ENCODE measurements at regions of chr13 and their contacts with region 1.

Region 1: GRCh38 chr13:44435142-44435982 is 61.7 kb downstream of the SERP2 start:
- DNase-seq: peak; percentile 99
- H3K4me3 Mint-ChIP-seq: peak overlapping the region; percentile 92
- H3K27ac Mint-ChIP-seq: peak overlapping the region; percentile 96
- H3K4me1 Mint-ChIP-seq: peaks cover 41% of the 10 kb centered on the region
- H3K27me3 Mint-ChIP-seq: no peaks in the 10 kb centered on the region
- CTCF ChIP-seq: no peak

Region 2: DNA sequence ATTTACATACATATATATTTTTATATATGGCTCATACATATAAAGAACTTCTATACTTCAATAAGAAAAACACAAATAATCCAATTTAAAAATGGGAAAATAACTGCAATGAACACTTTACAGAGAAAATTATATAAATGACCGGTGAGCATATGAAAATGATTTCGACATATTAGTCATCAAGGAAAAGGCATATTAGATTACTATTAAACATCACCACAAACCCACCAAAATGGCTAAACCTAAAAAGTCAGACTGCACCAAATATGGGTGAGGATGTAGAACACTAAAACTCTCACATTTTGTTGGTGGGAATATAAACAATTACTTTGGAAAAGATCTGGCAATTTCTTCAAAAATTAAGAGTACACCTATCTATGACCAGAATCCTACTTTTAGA is 964.8 kb before region 1 on chr13:
- CTCF ChIA-PET with region 1: no interaction called
- POLR2A ChIA-PET with region 1: no interaction called
- intact Hi-C with region 1: no loop called
- DNase-seq: no peak
- H3K4me3 Mint-ChIP-seq: no peak overlapping the region
- H3K27ac Mint-ChIP-seq: no peak overlapping the region
- H3K4me1 Mint-ChIP-seq: no peaks in the 10 kb centered on the region
- H3K27me3 Mint-ChIP-seq: no peaks in the 10 kb centered on the region
- CTCF ChIP-seq: no peak

Region 3: GRCh38 chr13:43905435-43906031 is 529.8 kb before region 1 on chr13:
- CTCF ChIA-PET with region 1: interaction called, 49 read pairs
- POLR2A ChIA-PET with region 1: interaction called, 27 read pairs
- intact Hi-C with region 1: no loop called
- DNase-seq: peak; percentile 67
- H3K4me3 Mint-ChIP-seq: no peak overlapping the region
- H3K27ac Mint-ChIP-seq: no peak overlapping the region
- H3K4me1 Mint-ChIP-seq: peaks cover 8% of the 10 kb centered on the region
- H3K27me3 Mint-ChIP-seq: no peaks in the 10 kb centered on the region
- CTCF ChIP-seq: peak; percentile 70

Region 4: DNA sequence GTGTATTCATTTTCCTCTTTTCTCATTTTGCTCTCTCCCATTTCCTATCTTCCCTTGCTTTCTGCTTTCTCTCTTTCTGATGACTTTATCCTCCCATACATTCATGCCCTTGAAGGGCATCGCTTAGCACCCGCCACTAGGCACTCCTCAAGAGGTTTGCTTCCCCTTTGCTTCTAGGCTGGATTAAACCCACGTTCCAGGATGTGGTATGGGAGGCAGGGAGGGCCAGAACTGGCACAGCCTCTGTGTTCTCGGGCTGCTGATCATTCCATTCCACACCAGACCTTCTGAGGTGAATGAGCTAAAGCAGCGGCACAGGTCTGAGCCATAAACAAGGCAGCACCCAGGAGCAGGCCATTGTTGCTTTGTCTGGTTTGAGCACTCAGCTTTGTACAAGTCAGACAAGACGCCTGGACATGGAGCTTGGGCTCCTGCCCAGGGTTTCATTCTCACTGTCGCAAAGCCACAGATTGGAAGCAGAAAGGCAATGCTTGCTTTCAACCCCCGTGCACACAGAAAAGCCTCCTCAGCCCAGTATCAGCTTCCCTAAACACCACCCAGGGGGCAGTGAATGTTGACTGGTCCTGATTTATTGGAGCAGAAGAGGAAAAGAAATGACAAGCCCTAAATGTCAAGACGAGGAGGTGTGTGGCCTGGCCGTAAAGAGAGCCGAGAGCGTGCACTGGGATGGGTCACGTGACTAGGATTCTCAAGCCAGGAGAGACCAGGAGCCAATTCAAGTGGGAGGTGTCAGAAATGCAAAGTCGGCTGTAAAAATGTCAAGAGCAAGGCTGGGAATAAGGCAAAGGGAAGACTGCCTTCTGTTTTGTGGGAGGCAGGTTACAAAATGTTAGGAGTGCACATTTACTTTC is 279.7 kb before region 1 on chr13:
- CTCF ChIA-PET with region 1: interaction called, 3 read pairs
- POLR2A ChIA-PET with region 1: interaction called, 80 read pairs
- intact Hi-C with region 1: loop called (anchors 1 kb)
- DNase-seq: no peak
- H3K4me3 Mint-ChIP-seq: no peak overlapping the region
- H3K27ac Mint-ChIP-seq: peak overlapping the region; percentile 36
- H3K4me1 Mint-ChIP-seq: peaks cover 21% of the 10 kb centered on the region
- H3K27me3 Mint-ChIP-seq: no peaks in the 10 kb centered on the region
- CTCF ChIP-seq: no peak

Region 5: GRCh38 chr13:44231786-44232516 is 203.4 kb before region 1 on chr13:
- CTCF ChIA-PET with region 1: interaction called, 3 read pairs
- POLR2A ChIA-PET with region 1: interaction called, 127 read pairs
- intact Hi-C with region 1: loop called (anchors 1 kb)
- DNase-seq: peak; percentile 99
- H3K4me3 Mint-ChIP-seq: peak overlapping the region; percentile 34
- H3K27ac Mint-ChIP-seq: peak overlapping the region; percentile 86
- H3K4me1 Mint-ChIP-seq: peaks cover 28% of the 10 kb centered on the region
- H3K27me3 Mint-ChIP-seq: no peaks in the 10 kb centered on the region
- CTCF ChIP-seq: no peak

Region 6: DNA sequence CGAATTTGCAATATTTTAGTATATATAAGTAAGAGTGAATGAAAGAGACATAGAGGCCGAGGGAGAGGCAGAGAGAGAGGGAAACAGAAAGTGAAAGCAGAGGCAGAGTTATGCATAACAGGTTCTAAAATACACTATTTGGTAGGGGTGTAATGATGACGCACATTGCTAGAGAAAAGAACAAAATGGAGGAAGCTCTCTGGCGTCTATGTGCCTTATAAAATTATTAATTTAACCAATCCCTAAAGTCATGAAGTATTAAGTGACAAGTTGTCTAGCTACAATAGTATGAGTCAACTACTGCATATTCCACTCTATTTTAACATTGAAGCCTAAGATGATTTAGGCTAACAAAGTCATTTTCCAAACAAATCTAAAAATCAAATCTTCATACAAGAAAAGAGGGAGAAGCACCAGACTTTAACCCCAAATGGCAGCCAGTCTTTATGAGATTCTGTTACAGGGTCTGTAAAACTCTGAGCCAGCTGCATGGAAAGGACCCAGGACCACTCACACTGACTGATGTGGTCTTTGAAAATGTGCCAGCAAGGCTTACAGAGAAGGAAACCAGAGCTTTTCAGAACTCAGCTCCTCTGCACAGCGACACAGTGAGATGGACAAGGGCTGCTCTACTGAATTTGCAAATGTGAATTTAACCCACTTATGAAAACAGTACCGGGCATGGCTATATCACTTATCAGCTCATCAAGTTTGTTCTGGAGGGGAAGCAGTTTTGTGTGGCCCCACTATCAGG is 160.7 kb before region 1 on chr13:
- CTCF ChIA-PET with region 1: no interaction called
- POLR2A ChIA-PET with region 1: interaction called, 45 read pairs
- intact Hi-C with region 1: no loop called
- DNase-seq: peak; percentile 66
- H3K4me3 Mint-ChIP-seq: peak overlapping the region; percentile 60
- H3K27ac Mint-ChIP-seq: peak overlapping the region; percentile 94
- H3K4me1 Mint-ChIP-seq: peaks cover 37% of the 10 kb centered on the region
- H3K27me3 Mint-ChIP-seq: no peaks in the 10 kb centered on the region
- CTCF ChIP-seq: no peak

Region 7: GRCh38 chr13:44425041-44425814 is 10.1 kb before region 1 on chr13:
- CTCF ChIA-PET with region 1: interaction called, 3 read pairs
- POLR2A ChIA-PET with region 1: interaction called, 22 read pairs
- intact Hi-C with region 1: no loop called
- DNase-seq: no peak
- H3K4me3 Mint-ChIP-seq: no peak overlapping the region
- H3K27ac Mint-ChIP-seq: no peak overlapping the region
- H3K4me1 Mint-ChIP-seq: no peaks in the 10 kb centered on the region
- H3K27me3 Mint-ChIP-seq: no peaks in the 10 kb centered on the region
- CTCF ChIP-seq: no peak

Region 8: DNA sequence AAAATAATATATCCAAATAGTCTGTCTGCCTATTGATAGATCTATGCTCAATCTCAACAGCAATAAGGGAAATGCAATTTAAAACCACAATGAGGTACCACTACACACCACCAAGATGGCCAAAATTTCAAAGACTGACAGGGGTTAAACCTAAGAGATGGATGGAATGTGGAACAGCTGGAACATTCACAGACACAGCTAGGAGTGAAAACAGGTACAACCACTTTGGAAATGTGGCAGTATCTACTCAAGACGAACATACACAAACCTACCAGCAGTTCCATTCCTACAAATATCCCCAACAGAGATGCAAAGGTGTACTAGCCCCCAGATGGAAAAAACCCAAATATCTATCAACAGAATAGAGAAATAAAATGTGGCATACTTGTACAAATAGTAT is 54.4 kb after region 1 on chr13:
- CTCF ChIA-PET with region 1: no interaction called
- POLR2A ChIA-PET with region 1: no interaction called
- intact Hi-C with region 1: no loop called
- DNase-seq: no peak
- H3K4me3 Mint-ChIP-seq: no peak overlapping the region
- H3K27ac Mint-ChIP-seq: no peak overlapping the region
- H3K4me1 Mint-ChIP-seq: peaks cover 3% of the 10 kb centered on the region
- H3K27me3 Mint-ChIP-seq: no peaks in the 10 kb centered on the region
- CTCF ChIP-seq: no peak

Measured in MCF 10A (cell line).